PC-3 (cell line): ENCODE measurements at regions of chr5 and their contacts with region 1.

Region 1: GRCh38 chr5:19328018-19328417 is 660.0 kb downstream of the CDH18 start:
- DNase-seq: no peak
- ATAC-seq: no peak
- H3K4me3 ChIP-seq: no peak overlapping the region
- H3K27ac ChIP-seq: no peak overlapping the region
- H3K4me1 ChIP-seq: peaks cover 1% of the 10 kb centered on the region
- H3K27me3 ChIP-seq: no peaks in the 10 kb centered on the region
- CTCF ChIP-seq: no peak

Region 2: DNA sequence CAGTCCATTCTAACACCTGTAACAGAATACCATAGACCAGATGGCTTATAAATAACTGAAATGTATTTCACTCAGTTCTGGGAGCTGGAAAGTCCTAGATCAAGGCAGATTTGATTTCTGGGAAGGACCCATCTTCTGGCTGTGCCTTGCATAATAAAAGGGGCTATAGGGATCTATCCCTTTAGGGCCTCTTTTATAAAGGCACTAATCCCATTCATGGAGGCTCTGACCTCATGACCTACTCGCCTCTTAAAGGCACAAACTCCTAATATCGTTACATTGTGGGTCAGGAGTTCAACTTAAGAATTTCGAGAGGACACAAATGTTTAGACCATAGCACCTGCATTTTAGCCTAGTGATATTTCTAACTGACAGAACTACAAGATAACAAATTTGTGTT is 41.0 kb after region 1 on chr5:
- CTCF ChIA-PET with region 1: no interaction called
- POLR2A ChIA-PET with region 1: no interaction called
- intact Hi-C with region 1: no loop called
- DNase-seq: no peak
- ATAC-seq: no peak
- H3K4me3 ChIP-seq: no peak overlapping the region
- H3K27ac ChIP-seq: no peak overlapping the region
- H3K4me1 ChIP-seq: peaks cover 13% of the 10 kb centered on the region
- H3K27me3 ChIP-seq: no peaks in the 10 kb centered on the region
- CTCF ChIP-seq: no peak

Region 3: DNA sequence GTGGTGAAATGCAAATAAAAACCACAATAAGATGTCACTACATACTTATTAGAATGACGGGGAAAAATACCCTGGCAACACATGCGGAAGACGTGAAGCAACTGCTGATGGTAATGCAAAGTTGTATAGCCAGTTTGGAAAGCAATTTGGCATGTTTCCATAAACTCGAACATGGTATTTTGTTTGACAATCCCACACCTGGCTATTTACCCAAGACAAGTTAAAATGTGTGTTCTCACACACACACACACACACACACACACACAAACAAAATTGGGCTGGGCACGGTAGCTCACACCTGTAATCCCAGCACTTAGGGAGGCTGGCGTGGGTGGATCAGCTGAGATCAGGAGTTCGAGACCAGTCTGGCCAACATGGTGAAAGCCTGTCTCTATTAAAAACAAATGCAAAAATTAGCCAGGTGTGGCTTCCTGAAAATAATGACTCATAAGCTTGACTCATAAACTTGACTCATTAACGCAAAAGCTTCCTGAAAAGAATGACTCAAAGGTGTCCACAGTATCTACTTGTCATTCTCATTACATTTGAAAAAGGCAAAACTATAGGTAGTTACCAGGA is 203.4 kb after region 1 on chr5:
- CTCF ChIA-PET with region 1: no interaction called
- POLR2A ChIA-PET with region 1: no interaction called
- intact Hi-C with region 1: loop called (anchors 5 kb)
- DNase-seq: peak; percentile 92
- ATAC-seq: peak; percentile 92
- H3K4me3 ChIP-seq: 0 out of 2 replicates have a peak overlapping the region, but pooled peaks have one; percentile 4
- H3K27ac ChIP-seq: peak overlapping the region; percentile 80
- H3K4me1 ChIP-seq: peaks cover 12% of the 10 kb centered on the region
- H3K27me3 ChIP-seq: no peaks in the 10 kb centered on the region
- CTCF ChIP-seq: no peak